Activated naive CD4-positive, alpha-beta T cell treated with anti-CD3 and anti-CD28 coated beads for 36 hours (primary cell): ENCODE measurements at regions of chr4 and their contacts with region 1.

Region 1: DNA sequence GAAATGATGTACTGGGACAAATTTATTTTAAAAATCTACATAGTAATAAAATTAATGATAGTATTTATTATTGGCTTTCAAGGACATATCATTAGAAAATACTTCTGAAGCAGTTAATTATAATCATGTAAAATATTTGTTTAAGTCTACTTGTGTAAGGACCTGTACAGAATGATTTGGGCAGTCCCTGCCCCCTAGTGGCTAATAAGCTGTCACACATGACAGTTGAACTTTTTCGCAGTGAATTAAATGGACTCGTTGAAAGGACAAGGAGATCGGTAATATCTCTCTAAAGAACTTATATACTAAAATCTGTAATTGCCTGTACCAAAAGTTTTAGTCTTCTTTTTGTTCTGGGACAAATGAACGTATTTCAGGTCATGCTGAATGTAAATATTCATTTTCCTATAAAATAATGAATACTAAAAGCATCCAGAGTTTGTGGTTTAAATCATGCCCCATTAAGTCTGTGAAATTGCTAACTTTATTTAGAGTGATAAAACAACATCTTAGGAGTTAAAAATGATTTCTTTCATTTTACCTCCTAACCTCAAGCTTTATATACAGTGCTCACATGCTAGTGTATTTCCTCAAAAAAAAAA is 13.6 kb downstream of the EXOC1 start:
- DNase-seq: peak; percentile 13
- H3K4me3 Mint-ChIP-seq: no peak overlapping the region
- H3K27ac Mint-ChIP-seq: no peak overlapping the region
- H3K4me1 Mint-ChIP-seq: peaks cover 16% of the 10 kb centered on the region
- H3K27me3 Mint-ChIP-seq: no peaks in the 10 kb centered on the region

Region 2: GRCh38 chr4:54322818-54323417 is 1544.2 kb before region 1 on chr4:
- CTCF ChIA-PET with region 1: no interaction called
- intact Hi-C with region 1: loop called (anchors 2 kb)
- DNase-seq: peak; percentile 78
- H3K4me3 Mint-ChIP-seq: no peak overlapping the region
- H3K27ac Mint-ChIP-seq: no peak overlapping the region
- H3K4me1 Mint-ChIP-seq: no peaks in the 10 kb centered on the region
- H3K27me3 Mint-ChIP-seq: no peaks in the 10 kb centered on the region

Region 3: DNA sequence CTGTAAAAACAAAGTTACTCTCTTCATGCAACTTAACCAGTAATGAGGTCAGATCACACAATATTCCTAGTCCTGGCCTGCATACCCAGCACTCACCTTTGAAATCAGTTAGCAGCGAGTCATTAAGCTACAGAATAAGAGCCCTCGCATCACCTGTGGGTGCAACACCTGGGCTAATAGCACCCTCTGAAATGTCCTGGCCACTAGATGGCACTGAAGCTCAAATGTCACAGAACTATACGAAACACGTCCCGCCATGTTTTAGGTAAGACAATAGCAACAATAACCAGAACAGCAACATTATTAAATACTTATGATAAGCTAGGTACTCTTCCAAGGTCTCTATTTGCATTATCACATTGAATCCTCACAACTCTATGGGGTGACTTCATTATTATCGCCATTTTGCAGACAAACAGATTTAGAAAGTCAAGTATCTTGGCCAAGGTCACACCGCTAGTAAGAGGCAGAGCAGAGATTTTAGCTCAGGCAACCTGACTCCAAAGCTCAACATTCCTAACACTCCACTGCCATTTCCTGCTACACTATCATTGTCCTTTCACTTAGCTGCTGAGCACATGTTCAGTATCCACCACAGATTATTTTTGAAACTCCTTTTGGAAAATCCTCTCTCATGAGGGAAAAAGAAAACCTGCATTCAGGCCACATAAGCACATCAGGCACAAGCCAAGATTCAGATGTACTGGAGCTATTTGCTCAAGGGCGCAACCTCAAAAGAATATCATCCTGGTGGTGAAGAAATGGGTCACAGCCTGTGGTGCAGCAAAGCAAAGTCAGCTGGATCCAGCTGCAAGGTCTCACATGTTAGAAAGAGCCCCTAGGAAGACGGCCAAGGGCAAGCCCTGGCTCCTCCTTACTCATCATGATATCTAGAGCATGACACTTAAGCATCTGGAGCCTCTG is 682.2 kb before region 1 on chr4:
- CTCF ChIA-PET with region 1: no interaction called
- intact Hi-C with region 1: loop called (anchors 10 kb)
- DNase-seq: peak; percentile 54
- H3K4me3 Mint-ChIP-seq: no peak overlapping the region
- H3K27ac Mint-ChIP-seq: no peak overlapping the region
- H3K4me1 Mint-ChIP-seq: no peaks in the 10 kb centered on the region
- H3K27me3 Mint-ChIP-seq: no peaks in the 10 kb centered on the region

Region 4: DNA sequence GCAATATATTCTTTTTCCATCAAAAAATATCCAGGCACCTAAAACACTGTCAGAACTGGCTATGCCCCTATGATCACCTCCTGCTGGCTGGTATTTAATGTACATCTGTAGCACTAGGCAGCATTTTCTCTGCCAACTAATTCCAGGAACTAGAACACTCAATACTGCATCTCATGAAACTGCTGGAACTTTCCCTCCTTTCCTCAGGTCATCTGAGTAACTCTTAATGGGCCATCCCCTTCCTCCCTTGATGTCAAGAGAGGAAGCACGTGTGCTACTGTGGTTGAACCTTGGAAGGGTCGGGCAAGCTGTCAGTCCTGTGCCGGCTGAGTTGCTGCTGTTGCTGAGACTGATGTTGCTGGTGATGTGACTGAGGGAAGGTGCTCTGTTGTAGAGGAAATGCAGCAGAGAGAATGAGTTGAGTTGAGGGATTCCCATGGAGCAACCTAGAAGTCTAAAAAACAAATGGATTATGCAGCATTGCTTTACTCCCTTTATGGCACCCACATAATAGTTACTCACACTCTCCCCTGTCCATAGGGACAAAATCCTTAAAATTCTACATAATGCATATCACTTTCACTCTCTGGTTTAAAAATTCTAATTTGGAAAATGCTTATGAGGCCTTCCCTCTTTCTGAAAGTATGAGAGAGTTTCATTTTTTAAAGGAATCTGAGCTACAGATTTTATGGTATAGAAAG is 431.8 kb before region 1 on chr4:
- CTCF ChIA-PET with region 1: no interaction called
- intact Hi-C with region 1: loop called (anchors 5 kb)
- DNase-seq: peak; percentile 68
- H3K4me3 Mint-ChIP-seq: no peak overlapping the region
- H3K27ac Mint-ChIP-seq: peak overlapping the region; percentile 37
- H3K4me1 Mint-ChIP-seq: peaks cover 16% of the 10 kb centered on the region
- H3K27me3 Mint-ChIP-seq: no peaks in the 10 kb centered on the region

Region 5: DNA sequence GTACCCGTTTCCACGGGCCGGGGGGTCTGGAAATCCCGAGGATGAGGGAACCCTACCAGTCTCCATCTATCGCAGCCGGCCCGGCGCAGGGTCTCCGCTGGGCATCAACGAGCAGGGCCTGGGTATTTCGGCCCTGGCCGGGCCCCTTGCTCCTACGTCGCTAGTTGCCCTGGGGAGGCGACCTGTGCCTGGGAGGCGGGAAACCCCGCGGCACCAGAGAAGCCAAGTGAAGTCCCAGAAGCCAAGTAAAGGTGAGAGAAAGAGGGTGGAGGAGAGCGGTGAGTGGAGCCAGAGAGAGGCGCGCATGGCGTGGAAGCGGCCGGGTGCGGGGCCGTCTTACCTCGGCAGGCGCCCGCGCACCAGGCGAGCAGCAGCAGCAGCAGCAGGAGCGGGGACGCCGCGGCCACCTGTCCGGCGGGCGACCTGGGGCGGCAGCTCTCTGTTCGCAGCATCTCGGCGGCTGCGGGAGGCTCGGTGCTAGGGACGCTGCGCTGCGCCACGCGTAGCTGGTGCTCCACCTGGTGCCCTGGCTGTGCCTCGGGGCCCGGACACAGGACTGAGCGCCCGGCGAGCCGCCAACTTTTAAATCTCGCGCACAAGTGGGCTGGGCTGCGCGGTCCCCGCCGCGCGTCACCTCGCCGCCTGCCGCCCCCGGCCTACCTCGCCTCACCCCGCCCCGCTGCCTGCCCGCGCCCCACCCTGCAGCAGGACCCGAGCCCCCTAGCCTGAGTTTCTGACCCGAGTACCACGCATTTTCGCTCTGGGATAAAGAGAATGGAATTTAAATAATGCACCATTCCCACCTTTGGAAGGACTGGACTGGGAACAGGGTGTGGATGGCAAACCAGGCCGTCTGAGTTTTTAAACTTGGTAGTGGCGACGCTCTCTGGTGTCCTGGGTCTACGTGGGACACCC is 231.1 kb before region 1 on chr4 and contains the start of gene NMU:
- CTCF ChIA-PET with region 1: no interaction called
- intact Hi-C with region 1: loop called (anchors 5 kb)
- DNase-seq: peak; percentile 58
- H3K4me3 Mint-ChIP-seq: peak within 1 kb of the TSS; percentile 69
- H3K27ac Mint-ChIP-seq: no peak within 1 kb of the TSS
- H3K4me1 Mint-ChIP-seq: peaks cover 15% of the 10 kb centered on the region
- H3K27me3 Mint-ChIP-seq: peaks cover 51% of the 10 kb centered on the region
- total RNA-seq, gene NMU: not detected

Region 6: GRCh38 chr4:55754754-55755350 is 112.2 kb before region 1 on chr4:
- CTCF ChIA-PET with region 1: interaction called, 4 read pairs
- intact Hi-C with region 1: loop called (anchors 5 kb)
- DNase-seq: no peak
- H3K4me3 Mint-ChIP-seq: no peak overlapping the region
- H3K27ac Mint-ChIP-seq: no peak overlapping the region
- H3K4me1 Mint-ChIP-seq: peaks cover 4% of the 10 kb centered on the region
- H3K27me3 Mint-ChIP-seq: peaks cover 2% of the 10 kb centered on the region

Region 7: GRCh38 chr4:55939421-55939820 is 72.3 kb after region 1 on chr4:
- CTCF ChIA-PET with region 1: no interaction called
- intact Hi-C with region 1: no loop called
- DNase-seq: no peak
- H3K4me3 Mint-ChIP-seq: no peak overlapping the region
- H3K27ac Mint-ChIP-seq: no peak overlapping the region
- H3K4me1 Mint-ChIP-seq: no peaks in the 10 kb centered on the region
- H3K27me3 Mint-ChIP-seq: no peaks in the 10 kb centered on the region

Region 8: GRCh38 chr4:56301181-56302076 is 434.4 kb after region 1 on chr4:
- CTCF ChIA-PET with region 1: no interaction called
- intact Hi-C with region 1: loop called (anchors 5 kb)
- DNase-seq: peak; percentile 84
- H3K4me3 Mint-ChIP-seq: peak overlapping the region; percentile 45
- H3K27ac Mint-ChIP-seq: no peak overlapping the region
- H3K4me1 Mint-ChIP-seq: peaks cover 12% of the 10 kb centered on the region
- H3K27me3 Mint-ChIP-seq: no peaks in the 10 kb centered on the region